Psoas muscle (tissue), 8 donors: ENCODE measurements at regions of chr6 and their contacts with region 1.

Region 1: DNA sequence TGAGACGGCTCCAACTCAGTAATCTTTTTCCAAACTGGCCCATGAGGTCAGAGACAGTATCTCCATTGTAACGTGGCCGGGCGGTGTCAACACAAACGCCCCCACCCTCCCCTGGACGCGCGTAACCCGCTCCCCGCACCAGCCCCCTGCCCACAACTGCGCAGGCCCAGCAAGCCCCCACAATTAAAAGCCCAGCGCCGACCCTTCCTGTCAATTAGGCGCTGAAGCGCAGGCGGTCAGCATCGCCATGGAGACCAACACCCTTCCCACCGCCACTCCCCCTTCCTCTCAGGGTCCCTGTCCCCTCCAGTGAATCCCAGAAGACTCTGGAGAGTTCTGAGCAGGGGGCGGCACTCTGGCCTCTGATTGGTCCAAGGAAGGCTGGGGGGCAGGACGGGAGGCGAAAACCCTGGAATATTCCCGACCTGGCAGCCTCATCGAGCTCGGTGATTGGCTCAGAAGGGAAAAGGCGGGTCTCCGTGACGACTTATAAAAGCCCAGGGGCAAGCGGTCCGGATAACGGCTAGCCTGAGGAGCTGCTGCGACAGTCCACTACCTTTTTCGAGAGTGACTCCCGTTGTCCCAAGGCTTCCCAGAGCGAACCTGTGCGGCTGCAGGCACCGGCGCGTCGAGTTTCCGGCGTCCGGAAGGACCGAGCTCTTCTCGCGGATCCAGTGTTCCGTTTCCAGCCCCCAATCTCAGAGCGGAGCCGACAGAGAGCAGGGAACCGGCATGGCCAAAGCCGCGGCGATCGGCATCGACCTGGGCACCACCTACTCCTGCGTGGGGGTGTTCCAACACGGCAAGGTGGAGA is at the starts of genes HSPA1A and HSPA1L:
- DNase-seq: peak; percentile 94 to 98
- ATAC-seq: peak; percentile 77 to 85 (median 80)
- H3K4me3 ChIP-seq: peak within 1 kb of the TSS; percentile 76
- H3K27ac ChIP-seq: peak within 1 kb of the TSS; percentile 88
- H3K4me1 ChIP-seq: peaks cover 26% of the 10 kb centered on the region
- H3K27me3 ChIP-seq: no peaks in the 10 kb centered on the region
- CTCF ChIP-seq: no peak
- total RNA-seq, gene HSPA1A: 241 to 940 (median 407) TPM
- total RNA-seq, gene HSPA1L: 2.5 to 6.2 (median 4.4) TPM

Region 2: DNA sequence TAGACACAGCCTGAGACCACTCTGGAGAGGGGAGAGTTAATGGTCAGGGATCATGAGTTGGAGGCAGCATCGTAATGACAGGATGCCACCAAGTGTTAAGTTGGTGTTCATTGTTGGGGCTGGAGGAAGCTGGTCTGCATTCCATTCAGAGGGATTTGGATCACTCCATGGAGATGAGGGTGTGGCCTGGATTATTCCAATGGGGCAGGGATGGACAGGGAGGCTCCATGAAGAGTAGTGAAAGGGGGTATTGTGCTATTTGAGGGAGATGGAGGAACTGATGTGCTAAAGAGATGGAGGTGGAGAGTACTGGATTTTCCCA is 51.7 kb before region 1 on chr6:
- intact Hi-C with region 1: no loop called
- DNase-seq: no peak
- ATAC-seq: peak in 1 of 4 donors; percentile 24
- H3K4me3 ChIP-seq: no peak overlapping the region
- H3K27ac ChIP-seq: no peak overlapping the region
- H3K4me1 ChIP-seq: no peaks in the 10 kb centered on the region
- H3K27me3 ChIP-seq: no peaks in the 10 kb centered on the region
- CTCF ChIP-seq: no peak

Region 3: GRCh38 chr6:32971581-32972352 is 1156.5 kb after region 1 on chr6:
- intact Hi-C with region 1: loop called in 1 of 2 experiments (anchors 10 kb)
- DNase-seq: peak; percentile 99 to 100
- ATAC-seq: peak; percentile 54 to 65 (median 60)
- H3K4me3 ChIP-seq: peak overlapping the region; percentile 79
- H3K27ac ChIP-seq: peak overlapping the region; percentile 100
- H3K4me1 ChIP-seq: peaks cover 25% of the 10 kb centered on the region
- H3K27me3 ChIP-seq: no peaks in the 10 kb centered on the region
- CTCF ChIP-seq: no peak